A549 (cell line): ENCODE measurements at regions of chr7 and their contacts with region 1.

Region 1: DNA sequence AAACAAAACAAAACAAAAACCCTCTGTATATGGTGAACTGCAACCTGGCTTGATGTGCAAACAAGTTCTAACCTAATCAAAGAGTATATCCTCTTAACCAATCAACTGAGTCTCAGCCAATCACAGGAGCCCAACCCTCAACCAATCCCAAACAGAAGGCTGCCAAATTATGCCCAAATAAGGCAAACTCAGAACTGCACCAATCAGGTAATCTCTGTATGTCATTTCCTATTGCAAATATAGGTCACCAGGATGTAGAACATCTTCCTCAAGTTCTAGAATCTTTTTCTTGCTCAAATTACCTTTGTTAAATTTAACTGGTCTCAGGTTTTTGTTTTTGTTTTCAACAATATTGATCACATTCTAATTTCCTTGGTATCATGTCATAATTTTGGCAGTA is 5.2 kb downstream of the FAM133B start:
- DNase-seq: peak in 1 of 2 experiments; percentile 68
- ATAC-seq: no peak; a peak in 1 of 6 replicates
- H3K4me3 ChIP-seq: no peak overlapping the region
- H3K27ac ChIP-seq: no peak overlapping the region; a peak in 1 of 6 replicates
- H3K4me1 ChIP-seq: peaks cover 38% of the 10 kb centered on the region
- CTCF ChIP-seq: no peak
- EP300 ChIP-seq: no peak
- POLR2A ChIP-seq: no peak
- RAD21 ChIP-seq: no peak

Region 2: DNA sequence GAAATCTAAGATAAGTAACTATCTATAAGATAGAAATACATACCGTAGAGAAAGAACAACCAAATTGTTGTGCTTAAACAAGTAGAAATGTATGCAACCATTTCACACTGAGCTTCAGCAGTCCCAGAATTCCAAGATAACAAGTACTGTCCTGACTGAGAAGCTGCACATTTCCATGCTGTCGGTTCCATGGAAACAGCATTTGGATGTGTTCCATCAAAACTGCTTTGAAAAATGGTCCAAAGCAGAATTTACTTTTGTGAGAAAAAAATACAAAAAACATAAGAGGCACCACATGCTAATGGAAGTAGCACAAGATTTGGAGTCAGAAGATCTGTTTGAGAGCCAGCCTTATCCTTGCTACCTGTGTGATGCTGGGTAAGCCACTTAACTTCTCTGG is 797.1 kb before region 1 on chr7:
- CTCF ChIA-PET with region 1: no interaction called
- POLR2A ChIA-PET with region 1: no interaction called
- DNase-seq: no peak
- ATAC-seq: no peak
- H3K4me3 ChIP-seq: no peak overlapping the region
- H3K27ac ChIP-seq: no peak overlapping the region
- H3K4me1 ChIP-seq: no peaks in the 10 kb centered on the region
- CTCF ChIP-seq: no peak
- EP300 ChIP-seq: no peak
- POLR2A ChIP-seq: no peak
- RAD21 ChIP-seq: no peak

Region 3: DNA sequence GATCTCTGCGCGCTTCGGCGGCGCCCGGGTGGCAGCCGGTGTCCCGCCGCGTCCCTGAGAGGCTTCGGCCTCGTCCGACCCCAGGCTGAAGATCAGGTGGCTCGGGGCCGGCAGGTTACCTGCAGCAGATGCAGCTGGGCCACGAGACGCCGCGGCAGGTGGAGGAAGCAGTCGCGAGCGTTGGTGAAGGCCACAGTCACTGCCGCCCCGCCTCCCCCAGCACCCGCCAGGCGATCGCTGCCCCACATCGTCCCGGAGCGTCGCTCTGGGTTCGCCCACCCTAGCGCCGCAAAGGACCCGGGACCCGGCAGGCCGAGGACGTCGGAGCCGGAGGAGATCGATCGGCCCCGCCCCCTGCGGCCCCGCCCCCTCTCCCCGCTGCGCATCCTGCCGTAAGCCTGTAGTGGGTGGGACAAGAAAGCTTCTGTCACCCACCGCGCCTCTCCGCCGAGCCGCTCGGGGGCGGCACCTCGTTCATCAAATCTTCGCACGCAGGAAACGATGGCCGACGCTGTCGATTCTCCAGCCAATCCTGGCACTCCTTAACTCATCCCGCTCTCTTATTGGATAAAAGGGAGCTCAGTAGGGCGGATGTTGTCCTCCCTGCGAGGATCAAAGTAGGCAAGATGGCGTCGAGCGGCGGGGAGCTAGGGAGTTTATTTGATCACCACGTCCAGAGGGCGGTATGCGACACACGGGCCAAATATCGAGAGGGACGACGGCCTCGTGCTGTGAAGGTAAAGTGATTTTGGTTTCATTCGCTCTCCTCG is 56.6 kb before region 1 on chr7 and contains the starts of genes PEX1 and RBM48:
- CTCF ChIA-PET with region 1: interaction called, 3 read pairs
- POLR2A ChIA-PET with region 1: interaction called, 13 read pairs
- DNase-seq: peak; percentile 98 to 99
- ATAC-seq: peak; percentile 93 to 97
- H3K4me3 ChIP-seq: peak within 1 kb of the TSS; percentile 76
- H3K27ac ChIP-seq: peak within 1 kb of the TSS; percentile 72 to 88
- H3K4me1 ChIP-seq: peaks cover 16% of the 10 kb centered on the region; the same call in 2 of the 3 replicates
- CTCF ChIP-seq: peak; percentile 64
- EP300 ChIP-seq: no peak
- POLR2A ChIP-seq: peak; percentile 56
- RAD21 ChIP-seq: no peak
- polyA plus RNA-seq, gene PEX1: 22.7 and 23.2 TPM in 2 replicates
- polyA plus RNA-seq, gene RBM48: 6.5 and 7.0 TPM in 2 replicates

Region 4: DNA sequence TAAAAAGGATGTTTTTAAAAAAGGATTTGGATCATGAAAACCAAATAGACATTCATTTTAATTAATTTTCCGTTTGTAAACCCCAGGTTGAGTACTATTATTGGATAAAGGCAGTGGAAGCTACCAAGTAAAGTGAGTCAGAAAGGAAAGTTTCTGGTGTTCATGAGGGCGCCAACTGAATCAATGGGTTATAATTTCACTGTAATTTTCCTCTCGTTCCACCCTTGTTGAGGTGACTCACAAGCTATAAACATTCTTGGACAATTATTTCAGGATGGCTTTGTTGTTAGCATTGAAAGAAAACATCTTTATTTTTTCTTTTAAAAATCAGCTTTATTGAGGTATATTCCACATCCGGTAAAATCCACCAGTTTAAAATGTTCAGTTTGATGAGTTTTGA is 10.3 kb after region 1 on chr7:
- CTCF ChIA-PET with region 1: interaction called, 32 read pairs
- POLR2A ChIA-PET with region 1: interaction called, 8 read pairs
- DNase-seq: no peak
- ATAC-seq: no peak
- H3K4me3 ChIP-seq: no peak overlapping the region
- H3K27ac ChIP-seq: no peak overlapping the region
- H3K4me1 ChIP-seq: no peaks in the 10 kb centered on the region
- CTCF ChIP-seq: no peak
- EP300 ChIP-seq: no peak
- POLR2A ChIP-seq: no peak
- RAD21 ChIP-seq: no peak

Region 5: DNA sequence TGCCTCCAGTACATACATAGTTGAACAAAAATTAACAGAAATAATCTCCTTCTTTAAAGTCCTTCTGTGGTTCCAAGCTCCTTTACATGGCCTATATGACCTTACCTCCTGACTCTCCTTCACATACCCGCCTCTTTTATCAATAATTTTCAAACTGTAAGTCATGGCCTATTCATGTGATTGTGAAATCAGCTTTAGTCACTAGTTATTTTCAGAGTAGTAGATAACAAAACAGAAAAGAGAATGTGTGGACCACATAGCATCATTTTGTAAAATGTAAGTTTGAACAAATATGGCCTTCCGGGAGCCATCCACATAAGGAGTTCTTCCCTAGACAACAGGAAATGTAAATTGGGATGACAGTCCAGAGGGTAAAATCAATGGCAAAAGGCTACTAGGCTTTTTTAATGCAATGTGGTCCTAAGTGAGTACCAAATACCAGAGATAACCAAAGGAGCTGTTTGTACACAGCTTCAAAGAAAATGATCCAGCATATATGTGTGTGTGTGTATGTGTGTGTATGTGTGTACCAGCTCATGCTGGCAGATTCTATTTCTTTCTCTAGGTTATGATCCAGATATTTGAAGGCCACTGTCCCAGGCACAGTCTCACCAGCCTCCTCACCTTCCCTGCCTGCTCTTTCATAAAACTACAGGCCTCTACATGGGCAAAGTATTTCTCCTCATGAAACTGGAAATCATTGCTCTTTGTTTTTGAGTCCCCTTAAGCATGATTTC is 17.5 kb after region 1 on chr7:
- CTCF ChIA-PET with region 1: interaction called, 35 read pairs
- POLR2A ChIA-PET with region 1: interaction called, 8 read pairs
- DNase-seq: no peak
- ATAC-seq: peak in 1 of 2 experiments; percentile 21; a peak in 2 of 6 replicates
- H3K4me3 ChIP-seq: no peak overlapping the region
- H3K27ac ChIP-seq: no peak overlapping the region
- H3K4me1 ChIP-seq: no peaks in the 10 kb centered on the region
- CTCF ChIP-seq: no peak
- EP300 ChIP-seq: no peak
- POLR2A ChIP-seq: no peak
- RAD21 ChIP-seq: no peak

Region 6: GRCh38 chr7:92609921-92610518 is 25.0 kb after region 1 on chr7:
- CTCF ChIA-PET with region 1: interaction called, 42 read pairs
- POLR2A ChIA-PET with region 1: interaction called, 9 read pairs
- DNase-seq: peak in 1 of 2 experiments; percentile 43
- ATAC-seq: peak; percentile 66 to 84; a peak in 4 of 6 replicates
- H3K4me3 ChIP-seq: no peak overlapping the region
- H3K27ac ChIP-seq: no peak overlapping the region
- H3K4me1 ChIP-seq: no peaks in the 10 kb centered on the region
- CTCF ChIP-seq: peak; percentile 52; the same call in 2 of the 3 replicates
- EP300 ChIP-seq: no peak
- POLR2A ChIP-seq: no peak
- RAD21 ChIP-seq: peak in 1 of 2 experiments; percentile 31; a peak in 2 of 5 replicates

Region 7: DNA sequence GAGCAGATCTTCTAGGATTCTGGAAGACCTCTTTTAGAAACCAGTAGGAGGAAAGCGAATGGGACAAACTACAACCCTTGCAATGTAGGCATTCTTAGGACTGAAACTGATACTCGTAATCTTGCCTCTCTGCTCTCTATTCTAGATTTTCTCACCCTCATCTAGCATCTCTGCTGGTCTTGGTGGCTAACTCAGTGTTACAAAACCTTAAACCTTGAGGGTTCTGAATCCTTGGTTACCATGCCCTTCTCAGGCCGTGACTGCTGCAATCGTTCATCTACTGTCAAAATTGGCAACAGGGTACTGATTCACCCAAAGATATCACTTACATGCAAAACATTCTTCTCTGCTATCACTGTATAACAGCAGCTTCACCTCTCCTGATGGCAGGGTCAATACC is 477.6 kb after region 1 on chr7:
- CTCF ChIA-PET with region 1: no interaction called
- POLR2A ChIA-PET with region 1: no interaction called
- DNase-seq: no peak
- ATAC-seq: peak in 1 of 2 experiments; percentile 43; a peak in 2 of 6 replicates
- H3K4me3 ChIP-seq: no peak overlapping the region
- H3K27ac ChIP-seq: no peak overlapping the region
- H3K4me1 ChIP-seq: no peaks in the 10 kb centered on the region
- CTCF ChIP-seq: no peak
- EP300 ChIP-seq: no peak
- POLR2A ChIP-seq: no peak
- RAD21 ChIP-seq: no peak